Sciatic nerve (tissue), 2 donors: ENCODE measurements at regions of chr1 and their contacts with region 1.

Region 1: DNA sequence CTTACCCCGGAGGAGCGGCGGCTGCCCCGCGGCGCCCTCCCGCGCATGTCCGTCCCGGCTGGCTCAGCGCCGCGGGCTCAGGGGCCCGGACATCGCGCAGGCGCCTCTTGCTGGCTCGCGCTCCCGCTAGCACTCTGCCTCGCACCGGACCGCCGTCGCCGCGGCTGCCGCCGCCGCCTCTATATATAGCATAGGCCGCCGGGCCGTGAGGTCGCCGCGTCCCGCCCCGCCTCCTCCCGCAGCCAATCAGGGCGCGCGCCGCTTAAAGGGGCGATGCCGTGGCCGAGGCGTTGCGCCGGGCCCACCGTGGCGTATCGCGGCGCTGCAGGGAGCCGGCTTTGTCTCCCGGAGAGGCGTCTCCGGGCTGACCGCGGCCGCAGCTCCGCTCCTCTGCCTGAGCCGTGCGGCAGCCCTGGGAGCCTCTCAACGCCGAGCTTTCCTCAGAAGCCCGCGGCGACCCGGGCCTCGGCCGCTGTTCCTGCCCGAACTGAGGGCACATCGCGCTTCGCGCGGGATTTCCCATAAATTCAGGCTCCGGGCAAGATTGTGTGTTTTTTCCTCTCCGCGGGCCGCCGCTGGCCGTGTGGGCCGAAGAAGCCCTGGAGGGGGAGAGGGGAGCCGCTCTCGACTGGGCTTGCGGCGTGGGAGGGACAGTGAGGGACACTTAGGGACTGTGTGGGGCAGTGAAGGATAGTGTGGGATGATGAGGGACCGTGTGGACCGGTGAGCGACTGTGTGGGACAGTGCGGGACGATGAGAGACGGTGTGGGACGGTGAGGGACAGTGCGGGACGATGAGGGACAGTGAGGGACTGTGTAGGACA is at the start of gene ERRFI1:
- DNase-seq: peak; percentile 97
- ATAC-seq: peak; percentile 93
- total RNA-seq, gene ERRFI1: 33.7 TPM

Region 2: DNA sequence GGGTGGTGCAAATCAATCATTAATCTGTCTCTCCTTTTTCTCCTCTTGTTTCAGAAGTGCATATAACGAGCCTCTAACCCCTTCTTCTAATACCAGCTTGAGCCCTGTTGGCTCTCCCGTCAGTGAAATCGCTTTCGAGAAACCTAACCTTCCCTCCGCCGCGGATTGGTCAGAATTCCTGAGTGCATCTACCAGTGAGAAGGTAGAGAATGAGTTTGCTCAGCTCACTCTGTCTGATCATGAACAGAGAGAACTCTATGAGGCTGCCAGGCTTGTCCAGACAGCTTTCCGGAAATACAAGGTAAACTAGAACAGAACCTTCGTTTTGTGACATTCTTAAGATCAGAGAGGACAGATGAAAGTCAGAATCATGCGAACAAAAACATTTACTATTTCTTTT is 280.6 kb before region 1 on chr1:
- intact Hi-C with region 1: no loop called
- DNase-seq: no peak
- ATAC-seq: no peak

Region 3: GRCh38 chr1:8121261-8122170 is 95.2 kb after region 1 on chr1:
- intact Hi-C with region 1: no loop called
- DNase-seq: no peak
- ATAC-seq: peak; percentile 76

Region 4: DNA sequence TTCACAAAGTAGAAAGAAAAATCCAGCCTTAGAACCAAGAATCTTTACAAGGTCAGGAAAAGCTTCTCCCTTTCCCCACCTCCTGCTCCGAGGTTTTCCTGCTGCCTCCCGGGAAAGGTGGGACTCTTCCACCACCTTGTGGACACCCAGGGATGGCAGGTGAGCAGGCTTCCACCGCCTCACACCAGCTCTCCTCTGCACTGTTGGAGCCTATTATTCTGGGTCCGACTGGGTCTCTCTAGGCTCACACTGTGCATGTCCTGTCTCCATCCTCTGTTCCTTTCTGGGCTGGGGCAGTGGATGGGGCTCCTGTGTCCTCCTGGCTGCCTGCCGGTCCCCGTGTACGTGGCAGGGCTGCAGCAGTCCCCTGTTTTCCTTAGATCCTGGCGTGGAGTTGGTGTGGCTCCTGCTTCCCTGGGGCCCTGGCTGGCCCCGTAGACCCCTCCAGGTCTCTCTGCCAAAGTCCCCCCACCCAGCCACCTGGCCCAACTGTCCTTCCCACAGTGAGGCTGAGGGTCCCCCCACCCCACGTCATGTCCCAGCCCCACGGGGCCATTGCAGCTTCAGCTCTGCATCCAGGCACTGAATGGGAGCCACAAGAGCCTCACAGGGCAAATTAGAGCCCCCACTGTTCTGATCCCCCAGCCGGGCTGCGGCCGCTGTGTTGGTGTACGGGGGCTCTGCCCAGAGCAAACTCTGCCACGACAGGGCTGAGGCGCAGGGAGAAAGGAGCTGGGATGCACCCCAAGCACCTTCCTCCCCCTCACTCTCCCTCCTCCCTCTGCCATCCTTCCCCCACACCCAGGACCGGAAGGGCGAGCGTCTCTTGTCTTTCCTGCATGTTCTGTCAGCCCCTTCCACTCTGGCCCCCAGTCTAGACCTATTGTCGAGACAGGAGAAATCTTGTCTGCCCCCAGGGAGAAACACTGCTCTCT is 288.2 kb after region 1 on chr1:
- intact Hi-C with region 1: loop called (anchors 10 kb)
- DNase-seq: peak; percentile 83
- ATAC-seq: peak; percentile 88

Region 5: DNA sequence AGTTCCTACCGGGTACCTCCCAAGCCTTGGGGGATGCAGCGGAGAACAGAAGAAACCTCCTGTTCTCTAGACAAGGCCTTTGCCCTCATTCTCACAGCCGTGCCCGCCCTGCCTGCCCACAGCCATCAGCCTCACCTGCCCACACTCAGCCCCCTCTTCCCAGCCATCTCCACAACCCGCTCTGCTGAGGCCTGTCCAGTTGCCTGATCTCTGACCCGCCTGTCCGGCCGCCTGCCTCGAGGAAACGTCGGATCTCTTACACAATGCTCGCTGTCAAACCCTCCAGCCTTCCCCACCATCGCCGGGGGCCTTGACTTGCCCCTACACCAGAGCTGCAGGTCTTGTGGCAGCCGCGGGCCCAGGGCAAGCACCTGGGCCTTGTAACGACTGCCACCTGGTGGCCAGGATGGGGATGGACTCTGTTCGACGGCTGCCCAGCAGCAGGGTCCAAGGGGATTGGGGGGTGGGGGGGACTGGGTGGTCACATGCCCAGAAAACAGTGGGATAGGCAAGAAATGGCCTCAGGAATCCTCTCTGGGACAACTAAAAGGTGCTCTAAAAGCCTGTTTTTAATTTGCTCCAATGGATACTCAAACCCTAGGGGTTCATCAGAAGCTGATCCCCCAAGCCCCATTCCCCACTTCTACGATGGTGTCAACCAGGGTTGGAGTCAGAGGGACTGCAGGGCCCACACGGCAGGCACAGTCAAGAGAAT is 322.6 kb after region 1 on chr1:
- intact Hi-C with region 1: loop called (anchors 10 kb)
- DNase-seq: peak; percentile 82
- ATAC-seq: peak; percentile 62